Endothelial cell of umbilical vein (primary cell): ENCODE measurements at regions of chr4 and their contacts with region 1.

Region 1: GRCh38 chr4:111943795-111944203 is 201.5 kb upstream of the FAM241A start:
- DNase-seq: peak; percentile 30
- H3K4me3 ChIP-seq: no peak overlapping the region
- H3K27ac ChIP-seq: no peak overlapping the region
- H3K4me1 ChIP-seq: no peaks in the 10 kb centered on the region
- H3K27me3 ChIP-seq: peaks cover 2 to 3% of the 10 kb centered on the region in 2 experiments
- CTCF ChIP-seq: peak in 1 of 2 donors; percentile 41
- POLR2A ChIP-seq: no peak

Region 2: GRCh38 chr4:111960241-111960667 is 16.5 kb after region 1 on chr4:
- CTCF ChIA-PET with region 1: interaction called, 14 read pairs
- POLR2A ChIA-PET with region 1: no interaction called
- dilution Hi-C with region 1: no loop called
- intact Hi-C with region 1: no loop called
- DNase-seq: peak; percentile 21
- H3K4me3 ChIP-seq: no peak overlapping the region
- H3K27ac ChIP-seq: no peak overlapping the region
- H3K4me1 ChIP-seq: peaks cover 16% of the 10 kb centered on the region
- H3K27me3 ChIP-seq: no peaks in the 10 kb centered on the region
- CTCF ChIP-seq: no peak
- POLR2A ChIP-seq: no peak

Region 3: DNA sequence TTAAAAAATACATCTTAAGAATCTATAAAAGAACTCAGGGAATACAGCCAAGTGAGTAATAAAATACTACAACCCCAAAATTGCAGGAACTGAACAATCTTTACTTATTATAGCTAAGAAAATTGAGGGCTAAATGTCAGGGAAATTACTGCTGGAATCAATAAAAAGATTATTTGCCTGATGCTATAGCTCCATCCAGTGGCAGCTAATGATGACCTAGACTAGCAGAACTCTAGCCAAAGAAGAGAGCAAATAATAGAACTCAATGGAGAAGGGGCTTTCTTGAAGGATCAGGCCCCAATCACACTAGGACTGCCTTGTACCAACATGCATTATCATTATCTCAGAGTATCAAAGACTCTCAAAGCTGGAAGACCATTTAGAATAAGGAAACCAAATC is 116.4 kb after region 1 on chr4:
- CTCF ChIA-PET with region 1: interaction called, 23 read pairs
- POLR2A ChIA-PET with region 1: no interaction called
- dilution Hi-C with region 1: no loop called
- intact Hi-C with region 1: loop called (anchors 1 kb)
- DNase-seq: peak; percentile 59
- H3K4me3 ChIP-seq: no peak overlapping the region
- H3K27ac ChIP-seq: no peak overlapping the region
- H3K4me1 ChIP-seq: peaks cover 9% of the 10 kb centered on the region
- H3K27me3 ChIP-seq: no peaks in the 10 kb centered on the region
- CTCF ChIP-seq: peak; percentile 45 to 58
- POLR2A ChIP-seq: no peak